ENCODE measurements at regions of chr2 and their contacts with region 1.

Region 1: DNA sequence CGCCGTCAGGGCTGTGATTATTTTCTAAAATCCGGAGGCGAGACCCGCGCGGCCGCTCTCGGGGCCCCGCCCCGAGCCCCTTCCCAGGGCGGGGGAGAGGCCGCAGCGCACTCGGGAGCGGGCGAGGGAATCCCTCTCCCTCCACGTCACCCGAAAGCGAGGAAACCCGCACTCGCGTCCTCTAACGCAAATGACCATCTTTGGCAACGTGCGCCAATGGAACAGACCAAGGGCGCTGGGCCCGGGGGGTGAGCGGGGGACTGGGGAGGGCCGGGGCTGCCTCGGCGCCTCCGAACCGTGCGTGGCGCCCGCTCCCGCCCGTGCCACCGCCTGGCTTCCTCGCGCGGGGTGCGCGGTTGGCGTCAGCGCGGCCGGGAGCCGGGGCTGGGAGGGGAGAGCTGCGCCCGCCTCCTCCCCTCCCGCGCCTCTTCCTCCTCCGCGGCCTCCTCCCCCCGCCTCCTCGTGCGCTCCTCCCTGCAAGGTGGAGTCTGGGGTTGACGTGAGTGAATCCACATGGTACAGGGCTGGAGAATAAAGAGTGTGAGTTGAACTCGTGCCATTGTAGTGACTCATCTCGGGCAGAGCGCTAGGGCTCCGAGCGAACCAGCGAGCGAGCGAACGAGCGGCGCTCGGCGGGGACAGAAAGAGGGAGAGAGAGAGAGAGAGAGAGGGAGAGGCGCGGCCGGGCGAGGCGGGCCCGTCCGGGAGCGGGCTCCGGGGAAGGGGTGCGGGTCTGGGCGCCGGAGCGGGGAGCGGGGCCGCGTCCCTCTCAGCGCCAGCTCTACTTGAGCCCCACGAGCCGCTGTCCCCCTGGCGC is at the start of gene FOSL2:
- DNase-seq: peak; percentile 97
- H3K4me3 Mint-ChIP-seq: peak within 1 kb of the TSS; percentile 94
- H3K27ac Mint-ChIP-seq: peak within 1 kb of the TSS; percentile 98
- H3K4me1 Mint-ChIP-seq: peaks cover 30% of the 10 kb centered on the region
- H3K27me3 Mint-ChIP-seq: peaks cover 2% of the 10 kb centered on the region
- total RNA-seq, gene FOSL2: 172 to 182 TPM

Region 2: GRCh38 chr2:27703638-27704341 is 688.7 kb before region 1 on chr2:
- CTCF ChIA-PET with region 1: interaction called, 5 read pairs
- POLR2A ChIA-PET with region 1: no interaction called
- intact Hi-C with region 1: loop called (anchors 10 kb)
- DNase-seq: peak; percentile 92
- H3K4me3 Mint-ChIP-seq: no peak overlapping the region
- H3K27ac Mint-ChIP-seq: peak overlapping the region; percentile 10
- H3K4me1 Mint-ChIP-seq: peaks cover 26% of the 10 kb centered on the region
- H3K27me3 Mint-ChIP-seq: no peaks in the 10 kb centered on the region

Region 3: GRCh38 chr2:27890146-27890923 is 502.2 kb before region 1 on chr2 and contains the starts of genes BABAM2 and RBKS:
- CTCF ChIA-PET with region 1: interaction called, 5 read pairs
- POLR2A ChIA-PET with region 1: interaction called, 20 read pairs
- intact Hi-C with region 1: loop called (anchors 1 kb)
- DNase-seq: peak; percentile 93
- H3K4me3 Mint-ChIP-seq: peak within 1 kb of the TSS; percentile 98
- H3K27ac Mint-ChIP-seq: peak within 1 kb of the TSS; percentile 100
- H3K4me1 Mint-ChIP-seq: peaks cover 63% of the 10 kb centered on the region
- H3K27me3 Mint-ChIP-seq: peaks cover 3% of the 10 kb centered on the region
- total RNA-seq, gene BABAM2: 72.3 to 76.6 TPM
- total RNA-seq, gene RBKS: 9.2 to 9.7 TPM

Region 4: GRCh38 chr2:28172114-28172898 is 220.2 kb before region 1 on chr2:
- CTCF ChIA-PET with region 1: no interaction called
- POLR2A ChIA-PET with region 1: no interaction called
- intact Hi-C with region 1: no loop called
- DNase-seq: no peak
- H3K4me3 Mint-ChIP-seq: no peak overlapping the region
- H3K27ac Mint-ChIP-seq: no peak overlapping the region
- H3K4me1 Mint-ChIP-seq: peaks cover 4% of the 10 kb centered on the region
- H3K27me3 Mint-ChIP-seq: no peaks in the 10 kb centered on the region

Region 5: DNA sequence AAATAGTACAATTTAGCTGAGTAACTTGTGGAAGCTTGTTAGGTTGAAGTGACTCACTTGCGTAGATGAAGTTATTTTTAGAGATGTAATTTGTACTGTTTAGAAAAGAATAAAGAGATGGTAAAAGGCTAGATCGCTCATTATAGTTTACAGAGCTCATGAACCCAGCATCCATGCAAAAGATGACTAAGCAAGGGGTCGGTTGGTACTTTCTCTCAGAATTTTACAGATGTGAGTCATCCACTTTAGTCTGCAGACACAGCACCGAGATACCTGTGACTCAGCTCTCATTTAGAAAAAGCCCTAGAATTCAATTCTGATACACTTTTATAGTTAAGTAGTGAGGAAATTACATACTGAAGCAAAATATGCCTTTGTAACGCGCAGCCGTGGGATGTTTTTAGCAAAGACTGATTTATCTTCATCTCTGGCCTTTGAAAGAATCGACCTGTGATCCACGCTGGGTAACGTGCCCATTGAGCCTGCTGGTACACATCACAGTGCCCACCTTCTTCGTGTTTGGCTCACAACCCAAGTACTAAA is 116.4 kb before region 1 on chr2:
- CTCF ChIA-PET with region 1: interaction called, 3 read pairs
- POLR2A ChIA-PET with region 1: interaction called, 4 read pairs
- intact Hi-C with region 1: loop called (anchors 1 kb)
- DNase-seq: peak; percentile 50
- H3K4me3 Mint-ChIP-seq: no peak overlapping the region
- H3K27ac Mint-ChIP-seq: peak overlapping the region; percentile 59
- H3K4me1 Mint-ChIP-seq: peaks cover 48% of the 10 kb centered on the region
- H3K27me3 Mint-ChIP-seq: no peaks in the 10 kb centered on the region

Region 6: DNA sequence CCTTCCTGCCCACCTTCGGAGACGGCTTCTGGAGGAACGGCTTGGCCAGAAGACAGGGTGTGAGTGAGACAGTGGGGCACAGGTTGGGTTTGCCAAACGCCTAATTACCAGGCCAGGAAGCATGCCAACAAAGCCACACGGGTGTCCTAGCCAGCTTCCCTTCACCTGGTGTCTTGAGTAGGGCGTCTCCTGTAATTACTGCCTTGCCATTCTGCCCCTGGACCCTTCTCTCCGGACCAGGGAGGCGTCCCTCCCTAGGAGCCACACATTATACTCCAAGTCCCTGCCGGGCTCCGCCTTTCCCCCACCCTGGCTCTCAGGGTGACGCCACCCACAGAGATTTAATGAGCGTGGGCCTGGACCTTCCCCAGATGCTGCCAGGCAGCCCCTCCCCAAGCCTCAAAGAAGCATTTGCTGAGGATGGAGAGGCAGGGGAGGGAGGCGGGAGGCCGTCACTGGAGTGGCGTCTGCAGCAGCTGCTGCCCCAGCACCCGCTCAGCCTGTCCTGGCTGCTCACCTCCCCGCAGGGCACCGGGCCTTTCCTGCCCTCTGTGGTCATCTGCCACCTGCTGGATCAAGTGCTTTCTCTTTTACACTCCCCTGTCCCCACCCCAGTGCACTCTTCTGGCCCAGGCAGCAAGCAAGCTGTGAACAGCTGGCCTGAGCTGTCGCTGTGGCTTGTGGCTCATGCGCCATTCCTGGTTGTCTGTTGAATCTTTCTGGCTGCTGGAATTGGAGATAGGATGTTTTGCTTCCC is 20.8 kb after region 1 on chr2:
- CTCF ChIA-PET with region 1: interaction called, 4 read pairs
- POLR2A ChIA-PET with region 1: interaction called, 15 read pairs
- intact Hi-C with region 1: loop called (anchors 1 kb)
- DNase-seq: no peak
- H3K4me3 Mint-ChIP-seq: peak overlapping the region; percentile 9
- H3K27ac Mint-ChIP-seq: peak overlapping the region; percentile 42
- H3K4me1 Mint-ChIP-seq: peaks cover 37% of the 10 kb centered on the region
- H3K27me3 Mint-ChIP-seq: no peaks in the 10 kb centered on the region

Region 7: DNA sequence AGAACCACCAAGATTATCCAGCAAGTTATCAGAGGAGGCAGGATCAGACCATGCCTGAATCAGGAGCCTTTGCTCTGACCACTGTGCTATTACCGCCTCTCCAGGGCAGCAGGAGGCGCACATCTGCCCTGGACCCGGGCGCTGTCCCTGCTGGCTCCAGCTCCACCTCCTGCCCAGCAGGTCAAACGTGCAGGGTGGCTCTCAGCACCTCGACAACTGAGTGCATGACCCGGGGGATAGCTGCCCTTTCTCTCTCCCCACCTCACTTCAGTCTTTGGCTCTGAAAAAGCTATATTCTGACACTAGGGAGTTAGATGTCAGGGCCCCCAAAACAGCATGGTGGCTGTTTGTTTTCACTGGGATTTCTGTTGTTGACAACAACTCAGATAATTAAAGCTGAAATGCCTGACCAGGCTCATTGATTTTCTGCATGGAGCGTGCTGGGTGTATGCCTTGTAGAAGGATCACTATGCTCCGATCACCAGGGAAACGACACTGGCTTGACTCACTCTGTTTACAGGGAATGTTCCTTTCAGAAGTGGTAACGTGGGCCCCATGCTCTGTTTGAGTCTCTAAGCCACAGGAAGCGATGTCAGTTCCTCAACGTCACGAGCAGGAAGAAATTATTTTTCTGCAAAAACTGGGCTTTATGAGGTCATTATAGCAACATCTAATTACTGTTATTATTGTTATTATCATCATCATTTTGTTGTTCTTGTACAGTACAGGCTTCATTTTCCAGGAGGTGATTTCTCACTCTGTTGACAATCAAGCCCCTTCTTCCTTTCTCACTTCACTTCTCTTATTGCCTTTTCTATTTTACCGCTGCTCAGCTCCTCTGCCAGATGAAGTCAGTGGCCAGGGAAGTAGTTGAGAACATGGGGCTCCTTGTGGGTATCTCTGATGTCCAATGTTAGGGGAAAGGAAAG is 228.9 kb after region 1 on chr2:
- CTCF ChIA-PET with region 1: no interaction called
- POLR2A ChIA-PET with region 1: no interaction called
- intact Hi-C with region 1: loop called (anchors 5 kb)
- DNase-seq: peak; percentile 85
- H3K4me3 Mint-ChIP-seq: peak overlapping the region; percentile 53
- H3K27ac Mint-ChIP-seq: peak overlapping the region; percentile 98
- H3K4me1 Mint-ChIP-seq: peaks cover 96% of the 10 kb centered on the region
- H3K27me3 Mint-ChIP-seq: no peaks in the 10 kb centered on the region

Region 8: GRCh38 chr2:30146438-30147147 is 1754.1 kb after region 1 on chr2 and contains the start of gene YPEL5:
- CTCF ChIA-PET with region 1: no interaction called
- POLR2A ChIA-PET with region 1: no interaction called
- intact Hi-C with region 1: loop called (anchors 5 kb)
- DNase-seq: peak; percentile 99
- H3K4me3 Mint-ChIP-seq: peak within 1 kb of the TSS; percentile 82
- H3K27ac Mint-ChIP-seq: peak within 1 kb of the TSS; percentile 95
- H3K4me1 Mint-ChIP-seq: peaks cover 51% of the 10 kb centered on the region
- H3K27me3 Mint-ChIP-seq: no peaks in the 10 kb centered on the region
- total RNA-seq, gene YPEL5: 43.3 to 43.4 TPM

Measured in activated CD4-positive, alpha-beta memory T cell treated with anti-CD3 and anti-CD28 coated beads for 36 hours (primary cell).